ENCODE measurements at regions of chr3 and their contacts with region 1.

Region 1: GRCh38 chr3:193872265-193872753 is 263.6 kb upstream of the HES1 start:
- DNase-seq: peak; percentile 28
- ATAC-seq: peak; percentile 38
- H3K4me3 ChIP-seq: no peak overlapping the region
- H3K4me3 Mint-ChIP-seq: no peak overlapping the region
- H3K27ac ChIP-seq: no peak overlapping the region
- H3K27ac Mint-ChIP-seq: peak overlapping the region; percentile 53
- H3K4me1 ChIP-seq: peaks cover 44 to 49% of the 10 kb centered on the region in 2 donors
- H3K4me1 Mint-ChIP-seq: peaks cover 55% of the 10 kb centered on the region
- H3K27me3 ChIP-seq: no peaks in the 10 kb centered on the region
- H3K27me3 Mint-ChIP-seq: peaks cover 4% of the 10 kb centered on the region
- CTCF ChIP-seq: no peak

Region 2: DNA sequence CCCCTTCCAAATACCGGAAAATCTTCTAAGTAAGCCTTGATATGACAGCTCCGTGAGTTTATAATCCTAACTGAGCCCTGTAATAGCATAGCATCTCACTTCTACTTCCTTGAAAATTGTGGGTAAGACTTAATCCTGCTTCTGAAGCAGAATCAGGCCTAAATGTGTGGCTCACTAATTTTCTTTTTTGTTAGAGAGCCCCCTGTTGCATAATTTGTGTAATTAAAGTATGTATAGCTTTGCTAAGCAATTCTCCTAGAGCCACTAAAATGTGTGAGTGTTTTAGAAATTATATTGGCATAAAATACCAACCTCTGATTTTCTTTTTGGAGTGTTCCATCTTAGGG is 1449.3 kb before region 1 on chr3:
- CTCF ChIA-PET with region 1: no interaction called
- POLR2A ChIA-PET with region 1: no interaction called
- intact Hi-C with region 1: no loop called
- DNase-seq: no peak
- ATAC-seq: no peak
- H3K4me3 ChIP-seq: no peak overlapping the region
- H3K4me3 Mint-ChIP-seq: no peak overlapping the region
- H3K27ac ChIP-seq: no peak overlapping the region
- H3K27ac Mint-ChIP-seq: no peak overlapping the region
- H3K4me1 ChIP-seq: no peaks in the 10 kb centered on the region
- H3K4me1 Mint-ChIP-seq: no peaks in the 10 kb centered on the region
- H3K27me3 ChIP-seq: peaks cover 0 to 3% (median 0%) of the 10 kb centered on the region in 4 experiments
- H3K27me3 Mint-ChIP-seq: peaks cover 10% of the 10 kb centered on the region
- CTCF ChIP-seq: no peak

Region 3: GRCh38 chr3:193831495-193832455 is 40.5 kb before region 1 on chr3:
- CTCF ChIA-PET with region 1: no interaction called
- POLR2A ChIA-PET with region 1: no interaction called
- intact Hi-C with region 1: loop called (anchors 5 kb)
- DNase-seq: peak; percentile 71
- ATAC-seq: peak; percentile 84
- H3K4me3 ChIP-seq: peak overlapping the region in 1 of 5 experiments; percentile 19
- H3K4me3 Mint-ChIP-seq: peak overlapping the region; percentile 65
- H3K27ac ChIP-seq: peak overlapping the region; percentile 54 to 57
- H3K27ac Mint-ChIP-seq: peak overlapping the region; percentile 85
- H3K4me1 ChIP-seq: peaks cover 14 to 23% of the 10 kb centered on the region in 2 donors
- H3K4me1 Mint-ChIP-seq: peaks cover 33% of the 10 kb centered on the region
- H3K27me3 ChIP-seq: no peaks in the 10 kb centered on the region
- H3K27me3 Mint-ChIP-seq: peaks cover 3% of the 10 kb centered on the region
- CTCF ChIP-seq: no peak

Region 4: GRCh38 chr3:193842029-193842798 is 30.1 kb before region 1 on chr3:
- CTCF ChIA-PET with region 1: interaction called, 3 read pairs
- POLR2A ChIA-PET with region 1: no interaction called
- intact Hi-C with region 1: loop called (anchors 2 kb)
- DNase-seq: peak; percentile 88
- ATAC-seq: peak; percentile 95
- H3K4me3 ChIP-seq: peak overlapping the region in 4 of 5 experiments; percentile 13 to 47 (median 32)
- H3K4me3 Mint-ChIP-seq: peak overlapping the region; percentile 84
- H3K27ac ChIP-seq: peak overlapping the region in 1 of 2 donors; percentile 39
- H3K27ac Mint-ChIP-seq: peak overlapping the region; percentile 91
- H3K4me1 ChIP-seq: peaks cover 19 to 26% of the 10 kb centered on the region in 2 donors
- H3K4me1 Mint-ChIP-seq: peaks cover 39% of the 10 kb centered on the region
- H3K27me3 ChIP-seq: peaks cover 0 to 17% (median 0%) of the 10 kb centered on the region in 4 experiments
- H3K27me3 Mint-ChIP-seq: peaks cover 4% of the 10 kb centered on the region
- CTCF ChIP-seq: no peak

Region 5: GRCh38 chr3:193917158-193917557 is 44.8 kb after region 1 on chr3:
- CTCF ChIA-PET with region 1: no interaction called
- POLR2A ChIA-PET with region 1: no interaction called
- intact Hi-C with region 1: no loop called
- DNase-seq: no peak
- ATAC-seq: no peak
- H3K4me3 ChIP-seq: no peak overlapping the region
- H3K4me3 Mint-ChIP-seq: no peak overlapping the region
- H3K27ac ChIP-seq: no peak overlapping the region
- H3K27ac Mint-ChIP-seq: no peak overlapping the region
- H3K4me1 ChIP-seq: no peaks in the 10 kb centered on the region
- H3K4me1 Mint-ChIP-seq: no peaks in the 10 kb centered on the region
- H3K27me3 ChIP-seq: no peaks in the 10 kb centered on the region
- H3K27me3 Mint-ChIP-seq: peaks cover 4% of the 10 kb centered on the region
- CTCF ChIP-seq: no peak

Region 6: DNA sequence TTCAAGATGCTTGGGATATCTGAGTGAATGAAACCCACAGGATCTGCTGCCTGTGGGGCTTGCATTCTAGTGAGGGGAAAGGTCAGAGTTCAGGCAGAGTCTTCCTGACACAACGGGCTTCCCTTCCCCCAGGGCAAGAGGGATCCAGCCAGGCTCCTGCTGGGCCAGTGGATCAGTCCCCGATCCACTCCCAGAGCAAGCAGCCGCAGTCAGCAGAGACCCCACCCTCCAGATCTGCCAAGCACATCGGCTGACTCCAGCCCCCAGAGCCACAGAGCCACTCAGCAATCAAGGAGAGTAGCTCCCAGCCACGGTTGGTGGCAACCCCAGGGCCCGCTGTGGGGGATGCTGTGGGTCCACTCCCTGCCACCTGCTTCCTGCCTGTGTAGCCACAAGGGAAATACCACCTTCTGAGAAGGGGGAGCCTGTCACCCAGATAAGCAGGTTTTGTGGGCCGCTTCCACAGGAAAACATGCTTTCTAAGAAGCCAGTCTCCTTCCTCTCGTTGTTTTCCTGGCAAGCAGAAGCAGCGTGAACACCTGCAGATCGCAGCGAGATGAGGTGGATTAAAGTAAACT is 433.9 kb after region 1 on chr3:
- CTCF ChIA-PET with region 1: no interaction called
- POLR2A ChIA-PET with region 1: no interaction called
- intact Hi-C with region 1: loop called (anchors 10 kb)
- DNase-seq: peak; percentile 89
- ATAC-seq: peak; percentile 63
- H3K4me3 ChIP-seq: peak overlapping the region in 3 of 5 experiments; percentile 7 to 57 (median 27)
- H3K4me3 Mint-ChIP-seq: peak overlapping the region; percentile 71
- H3K27ac ChIP-seq: peak overlapping the region; percentile 95 to 98
- H3K27ac Mint-ChIP-seq: peak overlapping the region; percentile 91
- H3K4me1 ChIP-seq: peaks cover 50 to 61% of the 10 kb centered on the region in 2 donors
- H3K4me1 Mint-ChIP-seq: peaks cover 51% of the 10 kb centered on the region
- H3K27me3 ChIP-seq: peaks cover 0 to 5% (median 2%) of the 10 kb centered on the region in 4 experiments
- H3K27me3 Mint-ChIP-seq: peaks cover 5% of the 10 kb centered on the region
- CTCF ChIP-seq: no peak